ENCODE measurements at regions of chr14 and their contacts with region 1.

Region 1: DNA sequence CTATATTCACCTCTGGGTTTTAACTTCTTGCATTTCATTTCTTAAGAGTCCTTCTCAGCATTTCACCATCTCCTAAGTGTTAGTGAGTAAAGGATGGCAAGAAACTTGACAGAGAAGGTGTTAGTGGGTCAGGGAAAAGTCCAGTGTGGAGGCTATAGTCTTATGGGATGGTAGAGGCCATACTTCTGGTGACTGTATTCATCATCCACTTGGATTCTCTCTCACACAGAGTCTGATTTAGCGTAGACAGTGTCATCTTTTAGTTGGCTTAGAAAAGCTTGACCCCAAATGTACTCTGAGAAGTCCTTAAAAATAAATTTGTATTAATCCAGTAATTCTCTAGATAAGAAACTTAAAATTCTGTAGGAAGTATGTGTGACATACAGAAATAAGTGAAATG is 232.4 kb upstream of the FBXO33 start:
- DNase-seq: no peak
- ATAC-seq: no peak
- H3K4me3 ChIP-seq: no peak overlapping the region
- H3K4me3 Mint-ChIP-seq: no peak overlapping the region
- H3K27ac ChIP-seq: no peak overlapping the region
- H3K27ac Mint-ChIP-seq: no peak overlapping the region
- H3K4me1 ChIP-seq: peaks cover 19% of the 10 kb centered on the region
- H3K4me1 Mint-ChIP-seq: peaks cover 14% of the 10 kb centered on the region
- H3K27me3 ChIP-seq: no peaks in the 10 kb centered on the region
- H3K27me3 Mint-ChIP-seq: no peaks in the 10 kb centered on the region
- CTCF ChIP-seq: no peak

Region 2: DNA sequence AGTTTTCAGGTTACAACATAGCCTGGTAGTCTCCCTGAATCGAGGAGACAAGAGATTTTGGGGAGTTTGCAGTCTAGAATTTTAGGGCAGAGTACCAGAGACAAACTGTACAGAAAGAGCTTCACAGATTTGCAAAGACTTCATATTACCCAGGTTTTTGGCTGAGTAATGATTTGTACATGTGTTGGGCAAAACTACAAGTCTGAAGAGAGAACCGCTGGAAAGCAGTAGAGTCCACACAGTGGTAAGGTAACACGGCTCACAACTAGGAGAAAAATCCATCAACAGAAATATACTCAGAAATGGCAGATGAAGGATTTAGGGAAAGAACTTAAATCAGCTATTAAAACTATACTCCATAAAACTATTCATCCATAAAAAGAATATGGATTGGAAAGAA is 258.1 kb before region 1 on chr14:
- CTCF ChIA-PET with region 1: no interaction called
- POLR2A ChIA-PET with region 1: no interaction called
- intact Hi-C with region 1: no loop called
- DNase-seq: no peak
- ATAC-seq: no peak
- H3K4me3 ChIP-seq: no peak overlapping the region
- H3K4me3 Mint-ChIP-seq: no peak overlapping the region
- H3K27ac ChIP-seq: no peak overlapping the region
- H3K27ac Mint-ChIP-seq: peak overlapping the region; percentile 32
- H3K4me1 ChIP-seq: no peaks in the 10 kb centered on the region
- H3K4me1 Mint-ChIP-seq: peaks cover 47% of the 10 kb centered on the region
- H3K27me3 ChIP-seq: no peaks in the 10 kb centered on the region
- H3K27me3 Mint-ChIP-seq: no peaks in the 10 kb centered on the region
- CTCF ChIP-seq: no peak

Region 3: GRCh38 chr14:39683691-39684090 is 19.0 kb after region 1 on chr14:
- CTCF ChIA-PET with region 1: no interaction called
- POLR2A ChIA-PET with region 1: no interaction called
- intact Hi-C with region 1: loop called in 1 of 2 experiments (anchors 2 kb)
- DNase-seq: no peak
- ATAC-seq: no peak
- H3K4me3 ChIP-seq: no peak overlapping the region
- H3K4me3 Mint-ChIP-seq: no peak overlapping the region
- H3K27ac ChIP-seq: no peak overlapping the region
- H3K27ac Mint-ChIP-seq: no peak overlapping the region
- H3K4me1 ChIP-seq: peaks cover 3% of the 10 kb centered on the region
- H3K4me1 Mint-ChIP-seq: peaks cover 6% of the 10 kb centered on the region
- H3K27me3 ChIP-seq: no peaks in the 10 kb centered on the region
- H3K27me3 Mint-ChIP-seq: no peaks in the 10 kb centered on the region
- CTCF ChIP-seq: no peak

Measured in CD8-positive, alpha-beta T cell (primary cell).